ENCODE measurements at regions of chr18 and their contacts with region 1.

Region 1: DNA sequence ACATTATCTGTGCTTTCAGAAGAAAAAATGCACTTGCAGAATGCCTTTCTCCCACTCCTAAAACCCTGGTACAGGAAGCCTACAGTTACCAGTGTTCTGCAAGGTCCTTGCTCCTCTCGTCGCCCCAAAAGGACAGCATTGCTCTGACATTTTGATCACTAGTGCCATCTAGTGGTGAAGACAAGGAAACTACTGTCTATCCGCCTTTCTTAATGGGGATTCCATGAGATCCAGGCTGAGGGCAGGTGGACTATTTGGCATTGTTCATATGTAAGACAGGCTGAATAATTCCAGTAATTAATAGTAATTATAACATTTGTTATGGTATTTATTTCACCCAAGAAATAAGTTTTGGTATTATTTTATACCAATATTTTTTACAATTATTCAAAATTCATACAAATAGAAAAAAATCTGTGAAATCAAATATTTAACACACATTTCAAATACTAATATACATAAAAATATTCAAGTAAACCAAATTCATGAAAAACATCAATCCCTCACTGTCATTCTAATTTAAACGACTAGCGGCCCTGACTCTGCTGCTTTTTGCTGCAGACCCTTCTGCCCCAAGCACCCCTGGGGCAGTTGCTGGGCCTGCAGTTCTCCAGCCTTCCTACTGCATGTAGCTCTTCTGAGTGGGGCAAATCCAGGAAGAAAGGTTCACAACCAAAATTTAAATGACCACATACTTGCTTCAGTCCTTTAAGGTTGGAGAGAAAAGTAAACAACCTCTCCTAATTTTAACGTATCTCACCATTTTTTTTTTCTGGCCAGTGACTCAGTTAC is 19.0 kb downstream of the TPGS2 start:
- DNase-seq: peak; percentile 63 to 81 (median 79)
- H3K4me3 ChIP-seq: no peak overlapping the region
- H3K27ac ChIP-seq: no peak overlapping the region
- H3K4me1 ChIP-seq: peaks cover 0 to 2% (median 0%) of the 10 kb centered on the region in 4 experiments
- H3K27me3 ChIP-seq: no peaks in the 10 kb centered on the region

Region 2: GRCh38 chr18:36545821-36546427 is 263.9 kb before region 1 on chr18:
- CTCF ChIA-PET with region 1: no interaction called
- POLR2A ChIA-PET with region 1: no interaction called
- DNase-seq: no peak
- H3K4me3 ChIP-seq: no peak overlapping the region
- H3K27ac ChIP-seq: no peak overlapping the region
- H3K4me1 ChIP-seq: no peaks in the 10 kb centered on the region
- H3K27me3 ChIP-seq: peaks cover 0 to 3% (median 0%) of the 10 kb centered on the region in 5 experiments

Region 3: GRCh38 chr18:36589857-36590543 is 219.8 kb before region 1 on chr18:
- CTCF ChIA-PET with region 1: no interaction called
- POLR2A ChIA-PET with region 1: no interaction called
- DNase-seq: no peak
- H3K4me3 ChIP-seq: no peak overlapping the region
- H3K27ac ChIP-seq: no peak overlapping the region
- H3K4me1 ChIP-seq: no peaks in the 10 kb centered on the region
- H3K27me3 ChIP-seq: no peaks in the 10 kb centered on the region

Region 4: DNA sequence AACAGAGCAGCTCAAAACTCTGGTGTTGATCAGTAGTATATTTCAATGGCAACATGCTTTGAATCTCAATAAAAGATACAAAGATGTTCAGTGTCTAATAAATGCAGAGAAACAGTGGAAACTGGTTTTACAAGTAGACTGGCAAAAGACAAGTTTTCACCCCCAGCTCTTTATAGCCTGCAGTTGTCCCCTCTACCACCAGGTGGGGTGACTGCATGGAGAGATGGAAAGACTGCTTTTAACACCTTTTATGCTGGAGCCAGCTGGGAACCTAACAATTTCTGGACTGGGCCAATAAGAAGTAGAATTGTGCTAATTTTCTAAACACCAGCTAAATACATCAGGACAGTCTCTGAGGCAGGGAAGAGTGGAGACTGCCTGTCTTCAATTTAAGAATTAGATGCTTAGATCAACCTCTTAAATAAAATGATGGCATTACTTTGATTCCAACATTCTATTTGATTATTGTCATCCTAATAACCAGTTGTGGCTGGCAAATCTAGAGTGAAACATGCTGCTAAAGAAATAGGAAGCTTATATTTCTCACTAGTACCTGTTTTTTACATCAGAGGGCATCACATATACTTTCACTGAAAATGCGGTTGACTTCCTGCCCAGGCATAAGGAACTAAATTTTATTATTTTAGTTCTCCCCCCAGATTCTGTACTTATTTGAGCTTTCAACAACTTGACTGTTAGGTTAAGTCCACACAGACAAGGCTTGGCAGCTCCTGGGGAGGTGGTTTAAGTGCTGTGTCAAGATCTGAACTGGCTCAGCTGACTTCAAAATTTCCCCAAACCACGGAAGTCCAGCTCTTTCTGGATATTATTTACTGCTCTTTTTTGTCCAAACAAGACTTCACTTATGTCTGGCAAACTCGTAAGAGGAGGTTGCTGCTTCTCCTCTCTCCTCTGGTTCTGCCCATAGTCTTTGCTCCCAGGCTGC is 121.5 kb before region 1 on chr18:
- CTCF ChIA-PET with region 1: interaction called, 10 read pairs
- POLR2A ChIA-PET with region 1: no interaction called
- DNase-seq: peak; percentile 59 to 72 (median 62)
- H3K4me3 ChIP-seq: no peak overlapping the region
- H3K27ac ChIP-seq: no peak overlapping the region
- H3K4me1 ChIP-seq: no peaks in the 10 kb centered on the region
- H3K27me3 ChIP-seq: no peaks in the 10 kb centered on the region

Measured in common myeloid progenitor, CD34-positive (primary cell).